ENCODE measurements at regions of chr12 and their contacts with region 1.

Region 1: GRCh38 chr12:122182887-122183585 is at the start of gene LRRC43:
- DNase-seq: peak; percentile 58 to 60
- ATAC-seq: peak; percentile 69 to 76 (median 75)
- H3K4me3 ChIP-seq: peak within 1 kb of the TSS; percentile 51
- H3K4me3 Mint-ChIP-seq: peak within 1 kb of the TSS; percentile 92
- H3K27ac ChIP-seq: peak within 1 kb of the TSS; percentile 68
- H3K27ac Mint-ChIP-seq: peak within 1 kb of the TSS; percentile 93 to 98
- H3K4me1 ChIP-seq: peaks cover 32% of the 10 kb centered on the region
- H3K4me1 Mint-ChIP-seq: peaks cover 23 to 25% of the 10 kb centered on the region in 2 donors
- H3K27me3 ChIP-seq: no peaks in the 10 kb centered on the region
- H3K27me3 Mint-ChIP-seq: no peaks in the 10 kb centered on the region
- CTCF ChIP-seq: no peak
- total RNA-seq, gene LRRC43: 5.0 to 18.5 (median 8.5) TPM

Region 2: GRCh38 chr12:122148657-122149056 is 34.4 kb before region 1 on chr12:
- intact Hi-C with region 1: no loop called
- DNase-seq: no peak
- ATAC-seq: no peak
- H3K4me3 ChIP-seq: no peak overlapping the region
- H3K4me3 Mint-ChIP-seq: no peak overlapping the region
- H3K27ac ChIP-seq: no peak overlapping the region
- H3K27ac Mint-ChIP-seq: peak overlapping the region in 1 of 2 donors; percentile 35
- H3K4me1 ChIP-seq: no peaks in the 10 kb centered on the region
- H3K4me1 Mint-ChIP-seq: peaks cover 0 to 5% of the 10 kb centered on the region in 2 donors
- H3K27me3 ChIP-seq: no peaks in the 10 kb centered on the region
- H3K27me3 Mint-ChIP-seq: no peaks in the 10 kb centered on the region
- CTCF ChIP-seq: no peak

Region 3: DNA sequence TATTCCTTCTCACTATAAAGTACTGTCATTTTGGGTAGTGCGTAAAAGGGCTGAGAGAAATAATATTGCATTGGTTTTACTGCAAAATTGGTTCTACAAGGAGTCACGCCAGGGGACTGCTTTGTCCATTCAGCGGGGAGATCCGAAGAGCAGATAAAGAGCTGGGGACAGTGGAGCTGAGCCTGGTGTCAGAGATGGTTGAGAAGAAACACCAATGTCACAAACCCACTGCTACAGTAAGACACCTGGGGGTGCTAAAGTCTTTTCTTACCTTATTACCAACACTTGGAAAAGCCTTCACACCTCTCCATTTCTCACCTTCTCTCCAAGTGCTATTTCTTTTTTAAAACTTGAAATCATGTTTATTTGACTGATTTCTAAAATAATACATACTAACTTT is 23.2 kb before region 1 on chr12:
- intact Hi-C with region 1: loop called (anchors 2 kb)
- DNase-seq: no peak
- ATAC-seq: no peak
- H3K4me3 ChIP-seq: no peak overlapping the region
- H3K4me3 Mint-ChIP-seq: no peak overlapping the region
- H3K27ac ChIP-seq: no peak overlapping the region
- H3K27ac Mint-ChIP-seq: peak overlapping the region; percentile 7 to 92
- H3K4me1 ChIP-seq: peaks cover 30% of the 10 kb centered on the region
- H3K4me1 Mint-ChIP-seq: peaks cover 34 to 42% of the 10 kb centered on the region in 2 donors
- H3K27me3 ChIP-seq: no peaks in the 10 kb centered on the region
- H3K27me3 Mint-ChIP-seq: no peaks in the 10 kb centered on the region
- CTCF ChIP-seq: no peak

Region 4: GRCh38 chr12:122172262-122172939 is 10.6 kb before region 1 on chr12:
- intact Hi-C with region 1: no loop called
- DNase-seq: no peak
- ATAC-seq: no peak
- H3K4me3 ChIP-seq: no peak overlapping the region
- H3K4me3 Mint-ChIP-seq: no peak overlapping the region
- H3K27ac ChIP-seq: no peak overlapping the region
- H3K27ac Mint-ChIP-seq: no peak overlapping the region
- H3K4me1 ChIP-seq: no peaks in the 10 kb centered on the region
- H3K4me1 Mint-ChIP-seq: no peaks in the 10 kb centered on the region
- H3K27me3 ChIP-seq: no peaks in the 10 kb centered on the region
- H3K27me3 Mint-ChIP-seq: no peaks in the 10 kb centered on the region
- CTCF ChIP-seq: no peak

Measured in natural killer cell (primary cell).